Caco-2 (cell line): ENCODE measurements at regions of chr11 and their contacts with region 1.

Region 1: DNA sequence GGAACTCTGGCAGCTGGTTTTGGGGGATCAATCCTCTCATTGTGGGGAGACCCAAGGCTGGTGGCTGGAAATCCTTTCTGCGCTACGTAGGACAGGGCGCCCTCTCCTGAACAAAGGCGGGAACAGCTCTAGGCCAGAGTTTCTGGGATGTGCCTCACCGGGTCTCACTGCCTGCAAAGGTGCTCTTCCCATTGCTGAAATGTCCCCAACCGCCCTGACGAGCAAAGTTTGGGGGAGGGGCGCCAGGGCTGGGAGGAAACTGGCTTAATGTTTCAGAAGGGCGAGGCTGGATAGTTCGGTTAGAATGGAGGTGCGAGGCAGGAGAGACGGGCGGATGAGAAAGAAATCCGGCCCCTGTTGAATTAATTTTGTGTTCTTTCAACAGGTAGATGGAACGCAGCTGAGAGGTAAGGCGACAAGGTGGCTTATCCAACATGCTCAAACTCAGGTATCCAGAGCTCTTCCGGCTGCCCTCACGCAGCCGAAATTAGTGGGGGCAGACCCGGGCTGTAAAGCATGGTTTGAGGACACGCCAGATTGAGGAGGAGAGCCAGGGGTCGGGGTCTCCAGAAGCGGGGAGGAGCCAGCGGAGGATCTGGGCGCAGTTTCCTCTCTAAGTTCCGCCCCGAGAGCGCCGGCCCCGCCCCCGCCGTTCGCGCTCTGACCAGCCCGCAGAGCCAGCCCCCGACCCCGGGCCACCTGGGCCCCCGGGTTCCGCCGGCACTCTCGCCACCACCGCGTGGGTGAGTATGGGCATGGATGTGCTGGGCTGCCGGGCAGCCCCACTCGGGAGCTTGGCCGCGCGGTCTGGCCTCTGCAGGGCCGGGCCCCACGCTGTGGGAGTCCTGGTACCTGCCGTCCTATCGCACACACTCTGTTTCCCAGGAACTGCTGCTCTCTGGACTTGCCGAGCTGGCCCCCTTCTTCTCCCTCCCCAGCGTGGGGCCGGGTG is at the start of gene PGAP2:
- DNase-seq: peak; percentile 87 to 88
- H3K4me3 ChIP-seq: peak within 1 kb of the TSS; percentile 89
- H3K4me3 Mint-ChIP-seq: peak within 1 kb of the TSS; percentile 89
- H3K27ac Mint-ChIP-seq: peak within 1 kb of the TSS; percentile 93
- H3K4me1 ChIP-seq: peaks cover 12% of the 10 kb centered on the region
- H3K4me1 Mint-ChIP-seq: peaks cover 13% of the 10 kb centered on the region
- H3K27me3 ChIP-seq: no peaks in the 10 kb centered on the region
- H3K27me3 Mint-ChIP-seq: no peaks in the 10 kb centered on the region
- CTCF ChIP-seq: peak; percentile 69 to 86
- total RNA-seq, gene PGAP2: 53.6 and 57.9 TPM in 2 replicates

Region 2: DNA sequence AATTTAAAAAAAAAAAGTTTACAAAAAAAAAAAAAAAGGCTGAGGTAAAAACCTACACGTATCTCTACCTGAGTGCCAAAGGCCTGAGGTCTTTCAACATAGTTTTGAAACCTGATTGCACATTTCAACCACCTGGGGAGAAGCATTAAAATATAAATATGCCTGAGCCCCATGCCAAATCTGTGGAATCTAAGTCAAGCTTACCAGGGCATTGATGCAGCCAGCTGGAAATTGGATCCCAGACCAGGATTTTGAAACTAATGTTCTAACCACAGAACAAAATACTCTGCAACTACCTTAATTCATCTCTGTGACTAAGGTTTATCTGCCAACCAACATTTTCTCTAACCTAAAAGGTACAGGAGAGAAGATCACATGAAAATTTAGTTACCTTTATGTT is 98.2 kb before region 1 on chr11:
- CTCF ChIA-PET with region 1: interaction called, 3 read pairs
- POLR2A ChIA-PET with region 1: no interaction called
- intact Hi-C with region 1: loop called (anchors 5 kb)
- DNase-seq: no peak
- H3K4me3 ChIP-seq: no peak overlapping the region
- H3K4me3 Mint-ChIP-seq: no peak overlapping the region
- H3K27ac Mint-ChIP-seq: no peak overlapping the region
- H3K4me1 ChIP-seq: peaks cover 62% of the 10 kb centered on the region
- H3K4me1 Mint-ChIP-seq: peaks cover 50% of the 10 kb centered on the region
- H3K27me3 ChIP-seq: no peaks in the 10 kb centered on the region
- H3K27me3 Mint-ChIP-seq: no peaks in the 10 kb centered on the region
- CTCF ChIP-seq: no peak

Region 3: DNA sequence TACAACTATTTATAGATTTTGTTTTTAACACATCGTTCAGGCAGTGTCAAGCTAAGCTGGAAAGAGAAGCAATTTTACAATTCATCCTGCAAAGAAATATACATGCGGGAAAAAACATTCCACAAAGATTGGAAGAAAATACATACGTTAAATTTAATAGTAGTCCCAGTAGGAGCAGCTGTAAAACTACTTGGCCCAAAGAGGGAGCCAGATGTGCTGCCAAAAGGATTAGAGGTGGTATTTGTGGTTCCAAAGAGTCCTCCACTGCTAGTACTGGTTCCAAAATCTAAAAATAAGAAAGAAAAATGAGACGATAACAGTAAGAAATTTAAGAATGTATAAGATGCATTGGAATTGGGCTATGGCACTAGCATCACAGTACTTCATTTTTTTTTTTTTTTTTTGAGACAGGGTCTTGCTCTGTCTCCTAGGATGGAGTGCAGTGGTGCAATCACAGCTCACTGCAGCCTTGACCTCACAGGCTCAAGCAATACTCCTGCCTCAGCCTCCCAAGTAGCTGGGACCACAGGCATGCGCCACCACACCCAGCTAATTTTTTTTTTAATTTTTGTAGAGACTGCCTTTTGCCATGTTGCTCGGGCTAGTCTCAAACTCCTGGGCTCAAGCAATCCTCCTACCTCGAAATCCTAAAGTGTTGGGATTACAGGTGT is 32.3 kb before region 1 on chr11:
- CTCF ChIA-PET with region 1: interaction called, 9 read pairs
- POLR2A ChIA-PET with region 1: interaction called, 3 read pairs
- intact Hi-C with region 1: loop called (anchors 2 kb)
- DNase-seq: no peak
- H3K4me3 ChIP-seq: no peak overlapping the region
- H3K4me3 Mint-ChIP-seq: no peak overlapping the region
- H3K27ac Mint-ChIP-seq: no peak overlapping the region
- H3K4me1 ChIP-seq: no peaks in the 10 kb centered on the region
- H3K4me1 Mint-ChIP-seq: no peaks in the 10 kb centered on the region
- H3K27me3 ChIP-seq: no peaks in the 10 kb centered on the region
- H3K27me3 Mint-ChIP-seq: no peaks in the 10 kb centered on the region
- CTCF ChIP-seq: no peak

Region 4: DNA sequence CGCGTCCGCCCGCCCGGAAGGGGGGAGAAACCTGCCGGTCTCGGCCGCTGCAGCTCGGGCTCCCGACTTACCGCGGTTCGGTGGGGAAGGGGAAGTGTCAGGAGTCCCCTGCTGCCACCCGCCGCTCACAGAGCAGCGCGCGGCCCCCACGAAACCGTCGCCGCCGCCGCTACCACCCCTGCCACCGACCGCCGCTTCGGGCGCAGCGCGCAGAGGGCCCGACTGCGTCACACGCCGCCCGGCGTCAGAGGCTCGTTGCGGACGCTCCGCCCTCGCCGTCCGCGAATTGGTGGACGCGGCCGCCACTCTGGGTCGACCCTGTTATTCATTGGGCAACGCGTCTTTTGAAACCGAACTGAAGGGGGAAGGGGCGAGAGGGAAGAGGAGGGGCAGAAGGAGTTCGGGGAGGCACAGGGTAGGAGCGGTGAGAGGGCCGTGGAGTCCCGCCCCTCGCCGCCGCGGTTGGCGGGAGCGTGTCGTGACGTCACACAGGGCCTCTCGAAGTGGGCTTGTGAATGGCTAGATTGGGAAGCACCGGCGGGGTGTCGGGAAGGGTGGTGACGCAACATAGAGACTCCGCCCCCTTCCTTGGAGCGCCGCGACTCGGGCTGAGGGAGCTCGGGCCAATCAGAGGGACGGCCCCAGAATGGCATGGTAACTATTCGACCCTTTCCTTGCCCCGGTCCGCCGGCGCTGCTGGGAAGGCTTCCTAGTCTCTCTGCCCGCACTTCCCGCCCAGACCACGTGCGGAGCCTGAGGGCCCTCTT is 10.7 kb before region 1 on chr11 and contains the start of gene NUP98:
- CTCF ChIA-PET with region 1: interaction called, 32 read pairs
- POLR2A ChIA-PET with region 1: interaction called, 25 read pairs
- intact Hi-C with region 1: loop called (anchors 1 kb)
- DNase-seq: peak; percentile 100
- H3K4me3 ChIP-seq: peak within 1 kb of the TSS; percentile 59
- H3K4me3 Mint-ChIP-seq: peak within 1 kb of the TSS; percentile 90
- H3K27ac Mint-ChIP-seq: peak within 1 kb of the TSS; percentile 96
- H3K4me1 ChIP-seq: peaks cover 25% of the 10 kb centered on the region
- H3K4me1 Mint-ChIP-seq: peaks cover 12% of the 10 kb centered on the region
- H3K27me3 ChIP-seq: no peaks in the 10 kb centered on the region
- H3K27me3 Mint-ChIP-seq: no peaks in the 10 kb centered on the region
- CTCF ChIP-seq: no peak
- total RNA-seq, gene NUP98: 146 and 150 TPM in 2 replicates

Region 5: GRCh38 chr11:3894128-3894731 is 86.0 kb after region 1 on chr11:
- CTCF ChIA-PET with region 1: no interaction called
- POLR2A ChIA-PET with region 1: no interaction called
- intact Hi-C with region 1: no loop called
- DNase-seq: no peak
- H3K4me3 ChIP-seq: no peak overlapping the region
- H3K4me3 Mint-ChIP-seq: no peak overlapping the region
- H3K27ac Mint-ChIP-seq: no peak overlapping the region
- H3K4me1 ChIP-seq: no peaks in the 10 kb centered on the region; the same call in 1 of the 2 replicates
- H3K4me1 Mint-ChIP-seq: peaks cover 11% of the 10 kb centered on the region
- H3K27me3 ChIP-seq: no peaks in the 10 kb centered on the region
- H3K27me3 Mint-ChIP-seq: no peaks in the 10 kb centered on the region
- CTCF ChIP-seq: no peak

Region 6: DNA sequence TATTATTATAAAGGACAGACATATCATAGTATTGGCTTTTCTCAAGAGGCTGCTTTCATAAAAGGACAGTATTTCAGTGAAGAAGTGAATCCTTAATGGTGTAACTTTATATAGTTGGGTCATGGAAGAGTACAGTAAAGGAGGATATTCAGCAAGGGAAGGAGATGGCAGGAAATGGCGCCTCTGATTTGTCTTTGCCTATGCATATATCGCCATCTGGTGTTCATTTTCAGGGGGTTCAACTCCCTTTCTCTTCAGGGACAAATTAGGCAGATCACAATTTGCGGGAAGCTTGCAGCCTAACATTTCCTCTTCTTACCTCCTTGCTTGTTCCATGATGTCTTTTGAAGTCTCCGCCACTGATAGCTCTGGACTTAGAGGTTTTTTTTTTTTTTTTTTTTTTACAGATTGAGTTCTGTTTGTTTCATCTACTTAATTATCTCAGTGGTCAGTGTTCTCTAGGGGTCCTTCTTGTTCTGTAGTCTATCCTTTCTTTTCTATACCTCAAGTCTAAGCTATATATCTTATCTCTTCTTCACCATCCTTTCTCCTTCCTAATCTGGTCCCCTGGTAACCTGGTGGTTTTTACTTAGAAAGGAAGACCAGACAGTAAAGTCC is 264.6 kb after region 1 on chr11:
- CTCF ChIA-PET with region 1: interaction called, 6 read pairs
- POLR2A ChIA-PET with region 1: no interaction called
- intact Hi-C with region 1: loop called (anchors 1 kb)
- DNase-seq: peak; percentile 63 to 76
- H3K4me3 ChIP-seq: no peak overlapping the region
- H3K4me3 Mint-ChIP-seq: no peak overlapping the region
- H3K27ac Mint-ChIP-seq: no peak overlapping the region
- H3K4me1 ChIP-seq: no peaks in the 10 kb centered on the region
- H3K4me1 Mint-ChIP-seq: no peaks in the 10 kb centered on the region
- H3K27me3 ChIP-seq: no peaks in the 10 kb centered on the region
- H3K27me3 Mint-ChIP-seq: no peaks in the 10 kb centered on the region
- CTCF ChIP-seq: peak; percentile 69 to 92

Region 7: GRCh38 chr11:4156571-4156970 is 348.4 kb after region 1 on chr11:
- CTCF ChIA-PET with region 1: no interaction called
- POLR2A ChIA-PET with region 1: no interaction called
- intact Hi-C with region 1: no loop called
- DNase-seq: no peak
- H3K4me3 ChIP-seq: no peak overlapping the region
- H3K4me3 Mint-ChIP-seq: no peak overlapping the region
- H3K27ac Mint-ChIP-seq: no peak overlapping the region
- H3K4me1 ChIP-seq: peaks cover 3% of the 10 kb centered on the region
- H3K4me1 Mint-ChIP-seq: peaks cover 9% of the 10 kb centered on the region
- H3K27me3 ChIP-seq: no peaks in the 10 kb centered on the region
- H3K27me3 Mint-ChIP-seq: peaks cover 8% of the 10 kb centered on the region
- CTCF ChIP-seq: no peak